Colonic mucosa (tissue), 4 donors: ENCODE measurements at regions of chr1 and their contacts with region 1.

Region 1: DNA sequence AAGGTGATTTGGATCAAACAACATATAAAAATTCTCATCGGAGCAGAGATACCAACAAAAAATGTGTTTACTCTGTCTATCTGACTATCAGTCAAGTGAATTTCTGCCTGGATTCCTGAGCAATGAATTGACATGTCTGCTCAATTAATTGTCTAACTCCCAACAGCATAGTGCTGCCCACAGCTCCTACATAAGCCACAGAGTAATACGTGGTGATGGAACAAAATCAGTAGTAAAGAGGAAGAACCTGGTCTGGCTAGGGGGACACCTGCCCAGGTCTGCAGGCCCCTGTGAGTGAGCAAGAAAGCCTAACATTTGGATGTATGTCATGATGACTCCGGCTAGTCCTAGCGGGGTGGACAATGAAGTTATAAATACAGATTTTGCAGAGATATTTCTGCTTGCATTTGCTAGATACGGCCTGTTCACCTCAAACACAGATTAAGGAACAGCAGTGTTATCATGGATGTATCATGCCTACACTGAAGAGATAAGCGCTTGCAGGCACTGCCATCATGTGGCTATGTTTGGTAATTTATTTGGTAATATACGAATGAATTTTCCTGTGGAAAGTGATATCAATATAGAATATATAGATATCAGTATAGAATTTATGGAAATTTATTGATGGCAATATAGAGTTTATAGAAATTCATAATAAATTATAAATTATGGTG is 69.6 kb upstream of the LRRC8B start:
- DNase-seq: peak; percentile 38
- H3K4me3 ChIP-seq: no peak overlapping the region
- H3K27ac ChIP-seq: no peak overlapping the region
- H3K4me1 ChIP-seq: no peaks in the 10 kb centered on the region
- H3K27me3 ChIP-seq: no peaks in the 10 kb centered on the region
- CTCF ChIP-seq: peak; percentile 50

Region 2: GRCh38 chr1:88935522-88936222 is 519.3 kb before region 1 on chr1:
- intact Hi-C with region 1: loop called (anchors 5 kb)
- DNase-seq: no peak
- H3K4me3 ChIP-seq: no peak overlapping the region
- H3K27ac ChIP-seq: no peak overlapping the region
- H3K4me1 ChIP-seq: no peaks in the 10 kb centered on the region
- H3K27me3 ChIP-seq: no peaks in the 10 kb centered on the region
- CTCF ChIP-seq: peak; percentile 56

Region 3: DNA sequence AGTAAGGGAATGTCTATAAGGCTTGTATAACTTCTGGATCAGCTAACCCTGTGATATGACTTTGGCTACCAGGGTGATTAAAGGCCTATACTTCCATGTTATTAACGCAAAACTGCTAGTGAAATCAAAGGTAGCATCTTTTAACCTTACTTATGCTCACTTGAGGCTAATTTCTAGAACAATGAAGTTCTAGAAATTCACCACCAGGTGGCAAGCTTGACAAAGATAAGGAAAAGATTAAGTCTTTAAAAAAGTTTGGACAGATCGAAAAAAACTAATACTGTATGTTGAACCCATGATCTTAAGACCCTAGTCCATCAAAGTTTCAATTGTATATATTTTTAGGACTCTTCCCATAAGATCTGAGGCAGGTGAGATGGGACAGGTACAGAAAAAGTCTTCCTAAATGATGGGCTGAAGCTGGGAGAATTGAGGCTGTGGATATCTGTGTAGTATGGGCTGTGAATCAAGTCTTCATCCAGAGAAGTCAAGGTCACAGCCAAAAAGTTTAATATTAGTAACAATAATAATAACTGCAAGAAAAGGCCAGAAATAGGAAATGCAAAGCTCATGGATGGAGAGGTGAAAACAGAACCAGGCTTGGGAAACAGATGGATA is 481.4 kb before region 1 on chr1:
- intact Hi-C with region 1: loop called (anchors 10 kb)
- DNase-seq: no peak
- H3K4me3 ChIP-seq: no peak overlapping the region
- H3K27ac ChIP-seq: no peak overlapping the region
- H3K4me1 ChIP-seq: no peaks in the 10 kb centered on the region
- H3K27me3 ChIP-seq: no peaks in the 10 kb centered on the region
- CTCF ChIP-seq: peak; percentile 45

Region 4: GRCh38 chr1:89339039-89339438 is 115.9 kb before region 1 on chr1:
- intact Hi-C with region 1: no loop called
- DNase-seq: no peak
- H3K4me3 ChIP-seq: no peak overlapping the region
- H3K27ac ChIP-seq: no peak overlapping the region
- H3K4me1 ChIP-seq: no peaks in the 10 kb centered on the region
- H3K27me3 ChIP-seq: no peaks in the 10 kb centered on the region
- CTCF ChIP-seq: no peak

Region 5: GRCh38 chr1:89381618-89382017 is 73.4 kb before region 1 on chr1:
- intact Hi-C with region 1: no loop called
- DNase-seq: no peak
- H3K4me3 ChIP-seq: no peak overlapping the region
- H3K27ac ChIP-seq: no peak overlapping the region
- H3K4me1 ChIP-seq: no peaks in the 10 kb centered on the region
- H3K27me3 ChIP-seq: no peaks in the 10 kb centered on the region
- CTCF ChIP-seq: no peak